Left cardiac atrium (tissue), 4 donors: ENCODE measurements at regions of chr2 and their contacts with region 1.

Region 1: GRCh38 chr2:26144953-26145680 is 27.8 kb upstream of the GAREM2 start:
- DNase-seq: peak; percentile 53
- ATAC-seq: peak; percentile 67 to 73

Region 2: DNA sequence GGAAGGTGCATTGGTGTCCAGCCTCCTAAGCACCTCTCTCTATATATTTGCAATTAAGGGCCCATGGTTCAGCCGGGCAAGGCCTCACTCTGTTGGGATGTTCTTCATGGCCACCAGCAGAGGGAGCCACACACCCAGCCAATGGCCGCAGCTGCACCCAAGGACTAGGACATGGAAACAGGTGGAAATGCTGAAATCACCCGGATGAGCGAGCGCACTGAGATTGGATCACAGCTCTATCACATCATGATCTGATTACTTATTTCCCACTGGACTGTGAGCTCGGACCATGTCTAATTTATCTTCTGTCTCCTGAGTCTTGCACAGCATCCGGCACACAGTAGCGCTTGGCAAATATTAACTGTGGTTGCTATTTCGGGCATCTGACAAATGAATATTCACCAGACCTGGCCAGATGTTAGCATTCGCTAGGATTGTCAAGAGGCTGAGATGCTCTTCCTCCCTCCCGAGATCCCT is 194.0 kb before region 1 on chr2:
- intact Hi-C with region 1: loop called (anchors 5 kb)
- DNase-seq: peak; percentile 80
- ATAC-seq: peak; percentile 96

Region 3: DNA sequence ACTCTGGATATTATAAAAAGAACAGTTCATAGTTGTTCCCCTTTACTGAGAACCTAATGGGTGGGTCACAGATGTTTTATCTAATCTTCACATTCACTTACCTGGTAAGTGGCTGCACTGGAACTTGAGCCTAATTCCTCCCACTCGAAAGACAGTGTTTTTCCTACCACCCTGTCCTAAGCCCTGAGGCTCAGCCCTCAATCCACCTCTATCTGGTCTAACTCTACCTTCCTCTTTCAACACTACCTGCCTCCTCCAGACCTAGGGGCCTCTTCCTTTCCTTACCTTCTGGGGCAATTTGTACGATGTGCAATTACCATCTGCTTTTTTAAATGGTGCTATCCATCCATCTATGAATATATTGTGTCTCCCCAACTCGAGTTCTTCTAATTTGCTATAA is 153.2 kb before region 1 on chr2:
- intact Hi-C with region 1: loop called in 1 of 2 experiments (anchors 2 kb)
- DNase-seq: no peak
- ATAC-seq: peak in 1 of 2 donors; percentile 23

Region 4: GRCh38 chr2:26088032-26088643 is 57.0 kb before region 1 on chr2:
- intact Hi-C with region 1: loop called (anchors 5 to 10 kb)
- DNase-seq: no peak
- ATAC-seq: peak; percentile 32 to 55